Endothelial cell of umbilical vein (primary cell): ENCODE measurements at regions of chr16 and their contacts with region 1.

Region 1: GRCh38 chr16:13919683-13920509 is at the start of gene ERCC4:
- DNase-seq: peak; percentile 100
- H3K4me3 ChIP-seq: peak within 1 kb of the TSS; percentile 66 to 83 (median 67)
- H3K27ac ChIP-seq: peak within 1 kb of the TSS; percentile 37
- H3K4me1 ChIP-seq: peaks cover 10% of the 10 kb centered on the region
- H3K27me3 ChIP-seq: peaks cover 3% of the 10 kb centered on the region in 2 experiments
- CTCF ChIP-seq: peak; percentile 97
- POLR2A ChIP-seq: peak; percentile 83
- total RNA-seq, gene ERCC4: 15.1 and 17.1 TPM in 2 replicates

Region 2: GRCh38 chr16:13811834-13812233 is 108.1 kb before region 1 on chr16:
- CTCF ChIA-PET with region 1: no interaction called
- POLR2A ChIA-PET with region 1: no interaction called
- dilution Hi-C with region 1: no loop called
- intact Hi-C with region 1: no loop called
- DNase-seq: no peak
- H3K4me3 ChIP-seq: no peak overlapping the region
- H3K27ac ChIP-seq: no peak overlapping the region
- H3K4me1 ChIP-seq: no peaks in the 10 kb centered on the region
- H3K27me3 ChIP-seq: no peaks in the 10 kb centered on the region
- CTCF ChIP-seq: no peak
- POLR2A ChIP-seq: no peak

Region 3: GRCh38 chr16:13984794-13985193 is 64.9 kb after region 1 on chr16:
- CTCF ChIA-PET with region 1: no interaction called
- POLR2A ChIA-PET with region 1: no interaction called
- dilution Hi-C with region 1: no loop called
- intact Hi-C with region 1: no loop called
- DNase-seq: no peak
- H3K4me3 ChIP-seq: no peak overlapping the region
- H3K27ac ChIP-seq: no peak overlapping the region
- H3K4me1 ChIP-seq: no peaks in the 10 kb centered on the region
- H3K27me3 ChIP-seq: no peaks in the 10 kb centered on the region
- CTCF ChIP-seq: no peak
- POLR2A ChIP-seq: no peak

Region 4: GRCh38 chr16:14057878-14058382 is 138.0 kb after region 1 on chr16:
- CTCF ChIA-PET with region 1: interaction called, 31 read pairs
- POLR2A ChIA-PET with region 1: no interaction called
- dilution Hi-C with region 1: no loop called
- intact Hi-C with region 1: loop called (anchors 5 kb)
- DNase-seq: peak; percentile 96
- H3K4me3 ChIP-seq: peak overlapping the region in 1 of 3 experiments; percentile 12
- H3K27ac ChIP-seq: peak overlapping the region; percentile 99
- H3K4me1 ChIP-seq: peaks cover 26% of the 10 kb centered on the region
- H3K27me3 ChIP-seq: no peaks in the 10 kb centered on the region
- CTCF ChIP-seq: no peak
- POLR2A ChIP-seq: peak; percentile 57

Region 5: DNA sequence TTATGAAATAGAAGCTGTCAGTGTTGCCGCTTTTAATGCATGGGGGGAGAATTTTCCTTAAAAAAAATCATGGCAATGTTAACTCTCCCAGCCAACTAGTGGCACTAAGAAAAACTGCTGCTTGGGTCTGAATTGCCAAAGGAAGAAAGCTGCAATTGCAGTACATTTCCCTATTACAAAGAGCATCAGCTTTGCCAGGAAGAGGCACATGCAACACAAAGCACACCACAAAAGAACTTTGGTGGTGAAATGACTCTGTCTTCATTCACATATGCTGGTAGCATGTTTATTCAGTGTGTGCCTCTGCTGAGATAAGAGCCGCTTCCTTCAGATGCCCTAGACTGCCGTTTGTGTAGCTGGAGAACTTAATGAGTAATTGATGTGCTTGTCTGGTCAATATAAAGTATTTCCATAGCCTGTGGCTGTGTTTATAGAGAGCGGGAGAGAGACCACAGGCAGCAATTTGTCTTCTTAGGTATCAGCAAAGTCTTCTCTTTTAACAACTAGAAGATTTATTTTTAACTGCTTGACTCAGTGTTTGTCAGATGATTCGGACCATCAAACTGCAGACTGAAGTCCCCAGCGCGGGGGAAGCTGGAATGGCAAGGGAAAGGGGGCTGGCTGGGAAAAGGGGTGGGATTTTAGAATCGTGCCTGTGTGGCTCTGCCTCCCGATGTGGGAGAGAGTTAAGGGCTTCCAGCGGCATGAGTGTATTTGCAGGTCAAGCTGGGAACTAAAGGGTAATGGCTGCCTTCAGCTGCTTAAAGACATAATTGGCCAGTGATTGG is 266.3 kb after region 1 on chr16:
- CTCF ChIA-PET with region 1: interaction called, 26 read pairs
- POLR2A ChIA-PET with region 1: no interaction called
- dilution Hi-C with region 1: no loop called
- intact Hi-C with region 1: loop called (anchors 2 kb)
- DNase-seq: peak; percentile 78
- H3K4me3 ChIP-seq: no peak overlapping the region
- H3K27ac ChIP-seq: no peak overlapping the region
- H3K4me1 ChIP-seq: peaks cover 19% of the 10 kb centered on the region
- H3K27me3 ChIP-seq: no peaks in the 10 kb centered on the region
- CTCF ChIP-seq: peak; percentile 28 to 48
- POLR2A ChIP-seq: no peak

Region 6: GRCh38 chr16:14240219-14240843 is 320.4 kb after region 1 on chr16:
- CTCF ChIA-PET with region 1: interaction called, 28 read pairs
- POLR2A ChIA-PET with region 1: no interaction called
- dilution Hi-C with region 1: loop called (anchors 25 kb)
- intact Hi-C with region 1: no loop called
- DNase-seq: no peak
- H3K4me3 ChIP-seq: no peak overlapping the region
- H3K27ac ChIP-seq: no peak overlapping the region
- H3K4me1 ChIP-seq: no peaks in the 10 kb centered on the region
- H3K27me3 ChIP-seq: no peaks in the 10 kb centered on the region
- CTCF ChIP-seq: no peak
- POLR2A ChIP-seq: no peak

Region 7: GRCh38 chr16:14285513-14286385 is 365.9 kb after region 1 on chr16:
- CTCF ChIA-PET with region 1: interaction called, 49 read pairs
- POLR2A ChIA-PET with region 1: interaction called, 4 read pairs
- dilution Hi-C with region 1: no loop called
- intact Hi-C with region 1: loop called (anchors 1 kb)
- DNase-seq: peak; percentile 92
- H3K4me3 ChIP-seq: peak overlapping the region; percentile 83 to 99 (median 94)
- H3K27ac ChIP-seq: peak overlapping the region; percentile 55
- H3K4me1 ChIP-seq: peaks cover 2% of the 10 kb centered on the region
- H3K27me3 ChIP-seq: no peaks in the 10 kb centered on the region
- CTCF ChIP-seq: no peak
- POLR2A ChIP-seq: no peak

Region 8: GRCh38 chr16:15704545-15704987 is 1784.7 kb after region 1 on chr16:
- CTCF ChIA-PET with region 1: no interaction called
- POLR2A ChIA-PET with region 1: no interaction called
- dilution Hi-C with region 1: no loop called
- intact Hi-C with region 1: loop called (anchors 5 kb)
- DNase-seq: peak; percentile 73
- H3K4me3 ChIP-seq: no peak overlapping the region
- H3K27ac ChIP-seq: no peak overlapping the region
- H3K4me1 ChIP-seq: peaks cover 28% of the 10 kb centered on the region
- H3K27me3 ChIP-seq: no peaks in the 10 kb centered on the region
- CTCF ChIP-seq: peak; percentile 79 to 87
- POLR2A ChIP-seq: no peak